ENCODE measurements at regions of chr19 and their contacts with region 1.

Region 1: DNA sequence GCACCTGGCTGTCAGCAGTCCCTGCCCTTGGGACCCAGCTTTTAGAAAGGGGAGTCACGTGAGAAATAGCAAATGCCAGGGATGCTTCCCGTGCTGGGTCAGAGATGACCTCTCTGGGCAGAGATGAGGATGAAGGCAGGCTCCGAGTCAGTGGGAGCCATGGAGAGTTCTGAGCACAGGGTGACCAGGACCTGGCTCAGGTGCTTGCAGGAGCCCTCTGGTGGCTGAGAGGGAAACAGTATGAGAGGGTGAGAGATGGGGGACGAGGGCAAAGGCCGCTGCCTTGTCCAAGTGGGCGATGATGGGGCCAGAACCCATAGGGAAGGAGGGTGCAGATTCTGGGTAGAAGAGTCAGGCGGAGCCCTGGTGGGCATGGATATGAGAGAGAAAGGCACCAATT is 15.8 kb downstream of the TMED1 start:
- DNase-seq: no peak
- ATAC-seq: peak; percentile 63
- H3K4me3 ChIP-seq: no peak overlapping the region
- H3K27ac ChIP-seq: no peak overlapping the region
- H3K4me1 ChIP-seq: no peaks in the 10 kb centered on the region
- H3K27me3 ChIP-seq: no peaks in the 10 kb centered on the region
- CTCF ChIP-seq: peak; percentile 25 to 43 (median 34); a peak in 3 of 6 replicates
- EP300 ChIP-seq: no peak
- POLR2A ChIP-seq: no peak
- RAD21 ChIP-seq: peak; percentile 26; the same call in 1 of the 2 replicates

Region 2: GRCh38 chr19:10701955-10702525 is 118.1 kb before region 1 on chr19:
- CTCF ChIA-PET with region 1: interaction called, 11 read pairs
- POLR2A ChIA-PET with region 1: no interaction called
- RAD21 ChIA-PET with region 1: interaction called, 3 read pairs
- SMC1A ChIA-PET with region 1: no interaction called
- in situ Hi-C with region 1: no loop called
- intact Hi-C with region 1: no loop called
- DNase-seq: no peak
- ATAC-seq: peak; percentile 62
- H3K4me3 ChIP-seq: peak overlapping the region; percentile 87
- H3K27ac ChIP-seq: peak overlapping the region; percentile 73
- H3K4me1 ChIP-seq: no peaks in the 10 kb centered on the region
- H3K27me3 ChIP-seq: no peaks in the 10 kb centered on the region
- CTCF ChIP-seq: peak in 2 of 3 experiments; percentile 28 to 41; a peak in 2 of 6 replicates
- EP300 ChIP-seq: no peak
- POLR2A ChIP-seq: no peak
- RAD21 ChIP-seq: peak; percentile 13; the same call in 1 of the 2 replicates